PC-3 (cell line): ENCODE measurements at regions of chr18 and their contacts with region 1.

Region 1: GRCh38 chr18:42298759-42299675 is 344.0 kb downstream of the PIK3C3 start:
- DNase-seq: peak; percentile 53
- ATAC-seq: peak; percentile 58; the same call in 1 of the 2 replicates
- H3K4me3 ChIP-seq: no peak overlapping the region
- H3K27ac ChIP-seq: no peak overlapping the region
- H3K4me1 ChIP-seq: no peaks in the 10 kb centered on the region
- H3K27me3 ChIP-seq: no peaks in the 10 kb centered on the region
- CTCF ChIP-seq: peak; percentile 70

Region 2: GRCh38 chr18:42255908-42256765 is 42.9 kb before region 1 on chr18:
- CTCF ChIA-PET with region 1: no interaction called
- POLR2A ChIA-PET with region 1: no interaction called
- intact Hi-C with region 1: no loop called
- DNase-seq: no peak
- ATAC-seq: no peak
- H3K4me3 ChIP-seq: no peak overlapping the region
- H3K27ac ChIP-seq: no peak overlapping the region
- H3K4me1 ChIP-seq: no peaks in the 10 kb centered on the region
- H3K27me3 ChIP-seq: no peaks in the 10 kb centered on the region
- CTCF ChIP-seq: no peak

Region 3: GRCh38 chr18:43271593-43272432 is 972.8 kb after region 1 on chr18:
- CTCF ChIA-PET with region 1: no interaction called
- POLR2A ChIA-PET with region 1: no interaction called
- intact Hi-C with region 1: loop called (anchors 10 kb)
- DNase-seq: peak; percentile 60
- ATAC-seq: no peak
- H3K4me3 ChIP-seq: no peak overlapping the region
- H3K27ac ChIP-seq: no peak overlapping the region
- H3K4me1 ChIP-seq: no peaks in the 10 kb centered on the region
- H3K27me3 ChIP-seq: no peaks in the 10 kb centered on the region
- CTCF ChIP-seq: peak; percentile 39; the same call in 1 of the 2 replicates

Region 4: DNA sequence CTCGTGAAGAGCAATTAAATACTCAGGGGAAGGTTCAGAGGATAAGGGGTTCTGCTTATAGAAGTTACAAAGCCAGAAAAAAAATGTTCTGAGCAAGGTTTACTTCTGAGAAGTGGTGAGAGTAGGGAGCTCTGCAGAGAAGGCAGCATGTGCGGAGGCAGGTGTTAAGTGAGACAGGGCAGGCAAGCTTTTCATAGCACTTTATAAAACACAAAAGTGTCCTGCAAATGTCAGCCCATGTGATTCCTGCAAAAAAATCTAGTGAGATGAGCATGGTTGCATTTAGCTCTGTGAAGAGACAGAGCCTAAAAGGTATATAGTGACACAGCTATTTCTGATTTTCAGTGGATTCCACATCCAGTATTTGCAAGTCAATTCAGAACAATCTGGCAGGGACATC is 1202.1 kb after region 1 on chr18:
- CTCF ChIA-PET with region 1: interaction called, 21 read pairs
- POLR2A ChIA-PET with region 1: no interaction called
- intact Hi-C with region 1: no loop called
- DNase-seq: no peak
- ATAC-seq: no peak
- H3K4me3 ChIP-seq: no peak overlapping the region
- H3K27ac ChIP-seq: no peak overlapping the region
- H3K4me1 ChIP-seq: no peaks in the 10 kb centered on the region
- H3K27me3 ChIP-seq: no peaks in the 10 kb centered on the region
- CTCF ChIP-seq: no peak

Region 5: GRCh38 chr18:43563780-43564179 is 1264.8 kb after region 1 on chr18:
- CTCF ChIA-PET with region 1: no interaction called
- POLR2A ChIA-PET with region 1: no interaction called
- intact Hi-C with region 1: loop called (anchors 1 kb)
- DNase-seq: peak; percentile 38
- ATAC-seq: peak; percentile 65
- H3K4me3 ChIP-seq: no peak overlapping the region
- H3K27ac ChIP-seq: no peak overlapping the region
- H3K4me1 ChIP-seq: no peaks in the 10 kb centered on the region
- H3K27me3 ChIP-seq: no peaks in the 10 kb centered on the region
- CTCF ChIP-seq: peak; percentile 54